ENCODE measurements at regions of chr1 and their contacts with region 1.

Region 1: DNA sequence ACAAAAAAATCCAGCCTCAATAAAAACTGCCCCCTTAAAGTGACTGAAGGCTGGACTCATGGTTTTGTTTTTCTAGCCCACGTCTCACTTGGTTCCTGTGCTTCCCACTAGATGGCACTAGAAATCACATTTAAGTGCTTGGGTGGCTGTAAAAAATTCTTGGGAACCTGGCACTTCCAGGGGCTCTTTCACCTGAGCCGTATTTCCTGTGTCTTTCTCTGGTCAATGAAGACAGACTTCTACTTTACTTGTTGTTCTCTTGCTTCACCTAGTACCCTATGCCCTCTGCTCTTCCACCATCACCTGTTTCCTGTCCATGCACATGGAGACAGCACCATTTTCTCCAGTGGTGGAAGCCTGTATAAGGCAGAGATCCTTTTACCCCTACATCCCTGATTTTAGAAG is 20.0 kb downstream of the METTL13 start:
- DNase-seq: no peak
- H3K4me3 ChIP-seq: no peak overlapping the region
- H3K27ac ChIP-seq: no peak overlapping the region
- H3K4me1 ChIP-seq: peaks cover 0 to 11% (median 5%) of the 10 kb centered on the region in 4 experiments; a peak in 3 of 7 replicates
- H3K27me3 ChIP-seq: no peaks in the 10 kb centered on the region
- CTCF ChIP-seq: peak in 2 of 3 experiments; percentile 75 to 87; a peak in 3 of 4 replicates
- EP300 ChIP-seq: no peak
- POLR2A ChIP-seq: no peak
- RAD21 ChIP-seq: peak; percentile 87 to 94

Region 2: DNA sequence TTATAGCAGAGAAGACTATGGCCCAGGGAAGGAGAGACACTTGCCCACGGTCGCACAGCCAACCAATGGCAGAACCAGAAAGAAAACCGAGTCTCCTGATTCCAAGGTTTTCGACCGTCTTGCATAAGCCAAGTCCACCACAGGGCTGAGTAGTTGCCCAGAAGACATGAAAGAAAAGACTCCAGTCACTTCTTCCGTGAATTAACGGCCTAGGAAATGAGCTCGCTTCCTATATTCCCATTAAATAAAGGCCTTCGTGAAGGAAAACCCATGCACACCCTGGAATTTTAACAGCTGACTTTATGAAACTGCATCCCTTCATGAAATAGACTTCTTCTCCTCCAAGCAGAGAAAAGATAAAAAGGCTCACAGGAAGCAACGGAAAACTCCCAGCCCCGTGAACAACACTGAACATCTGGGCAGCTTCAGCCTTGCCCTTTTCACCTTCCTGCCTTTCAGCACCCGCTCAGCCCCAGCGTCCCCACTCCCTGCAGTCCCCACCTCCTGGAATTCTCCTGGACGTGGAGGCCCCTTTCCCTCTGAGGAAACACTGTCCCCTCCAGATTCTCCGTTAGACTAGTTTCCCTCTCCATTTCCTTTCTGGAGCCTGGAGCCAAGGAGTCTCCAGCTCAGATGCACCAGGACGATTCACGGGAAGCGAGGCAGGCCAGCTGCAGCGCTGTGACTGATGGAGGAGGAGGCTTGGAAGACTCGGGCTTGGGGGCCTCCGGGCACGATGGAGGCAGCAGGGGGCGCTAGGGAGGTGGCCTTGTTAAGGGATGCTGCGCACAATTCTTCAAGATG is 146.3 kb before region 1 on chr1:
- CTCF ChIA-PET with region 1: interaction called, 19 read pairs
- POLR2A ChIA-PET with region 1: no interaction called
- DNase-seq: peak; percentile 41 to 98
- H3K4me3 ChIP-seq: no peak overlapping the region; a peak in 2 of 8 replicates
- H3K27ac ChIP-seq: no peak overlapping the region
- H3K4me1 ChIP-seq: peaks cover 0 to 5% (median 0%) of the 10 kb centered on the region in 4 experiments; a peak in 1 of 7 replicates
- H3K27me3 ChIP-seq: no peaks in the 10 kb centered on the region
- CTCF ChIP-seq: peak; percentile 79 to 91 (median 85)
- EP300 ChIP-seq: no peak
- POLR2A ChIP-seq: no peak
- RAD21 ChIP-seq: peak; percentile 65 to 71

Region 3: DNA sequence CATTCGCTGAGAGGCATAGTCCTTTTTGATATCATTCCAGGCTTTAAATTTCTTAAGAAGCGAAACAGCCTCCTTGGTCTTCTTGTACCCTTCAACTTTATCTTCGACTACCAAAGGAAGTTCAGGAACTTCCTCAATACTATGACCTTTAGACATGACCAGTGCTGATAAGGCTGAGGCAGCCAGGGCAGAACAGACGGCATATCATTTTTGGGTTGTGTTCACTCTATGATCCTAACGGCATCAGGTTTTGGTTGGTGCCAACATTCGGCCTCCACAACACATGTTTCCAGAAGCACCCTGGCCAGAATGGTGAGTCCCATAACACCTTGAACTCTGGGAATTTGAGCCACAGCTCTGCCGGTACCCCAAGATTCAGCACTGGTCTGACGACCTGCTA is 117.6 kb before region 1 on chr1:
- CTCF ChIA-PET with region 1: no interaction called
- POLR2A ChIA-PET with region 1: no interaction called
- DNase-seq: no peak
- H3K4me3 ChIP-seq: no peak overlapping the region
- H3K27ac ChIP-seq: no peak overlapping the region
- H3K4me1 ChIP-seq: no peaks in the 10 kb centered on the region
- H3K27me3 ChIP-seq: no peaks in the 10 kb centered on the region
- CTCF ChIP-seq: no peak
- EP300 ChIP-seq: no peak
- POLR2A ChIP-seq: no peak
- RAD21 ChIP-seq: no peak

Region 4: DNA sequence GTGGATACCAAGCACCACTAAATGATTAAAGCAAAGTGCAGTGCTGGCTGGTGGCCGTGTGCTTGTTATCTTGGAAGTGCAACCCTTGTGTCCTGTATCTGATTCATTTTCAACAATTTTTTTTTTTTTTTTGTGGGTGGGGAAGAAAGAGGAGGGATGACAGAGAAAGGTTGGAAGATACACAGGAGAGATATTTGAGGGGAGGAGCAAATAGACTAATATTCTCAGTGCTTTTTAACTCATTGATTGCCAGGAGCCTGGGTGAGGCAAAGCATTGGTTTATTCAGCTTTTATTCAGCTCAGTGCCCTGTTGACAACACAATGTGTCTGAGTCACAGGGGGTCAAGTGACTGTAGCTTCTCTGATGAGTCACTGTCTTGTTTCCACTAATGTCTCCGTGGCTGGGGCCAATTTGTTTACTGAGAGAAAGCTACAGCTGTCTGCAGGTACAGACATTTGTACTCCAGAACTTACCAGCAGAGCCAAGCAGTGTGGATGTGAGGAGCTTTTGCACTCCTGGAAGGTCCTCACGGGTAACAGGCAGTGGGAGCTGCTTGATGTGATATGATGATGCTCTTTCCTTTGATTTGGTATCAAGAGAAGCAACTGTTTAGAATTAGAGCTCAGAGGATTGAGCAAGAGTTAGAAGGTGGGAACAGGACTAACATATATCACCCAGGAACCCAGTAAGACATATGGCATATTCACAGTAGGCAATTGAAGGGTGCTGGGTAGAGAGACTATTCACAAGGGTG is 16.2 kb after region 1 on chr1:
- CTCF ChIA-PET with region 1: interaction called, 92 read pairs
- POLR2A ChIA-PET with region 1: interaction called, 3 read pairs
- DNase-seq: no peak
- H3K4me3 ChIP-seq: peak overlapping the region in 1 of 4 experiments; percentile 13; a peak in 2 of 8 replicates
- H3K27ac ChIP-seq: no peak overlapping the region
- H3K4me1 ChIP-seq: peaks cover 0 to 7% (median 2%) of the 10 kb centered on the region in 4 experiments; a peak in 2 of 7 replicates
- H3K27me3 ChIP-seq: no peaks in the 10 kb centered on the region
- CTCF ChIP-seq: no peak
- EP300 ChIP-seq: no peak
- POLR2A ChIP-seq: no peak
- RAD21 ChIP-seq: no peak

Region 5: DNA sequence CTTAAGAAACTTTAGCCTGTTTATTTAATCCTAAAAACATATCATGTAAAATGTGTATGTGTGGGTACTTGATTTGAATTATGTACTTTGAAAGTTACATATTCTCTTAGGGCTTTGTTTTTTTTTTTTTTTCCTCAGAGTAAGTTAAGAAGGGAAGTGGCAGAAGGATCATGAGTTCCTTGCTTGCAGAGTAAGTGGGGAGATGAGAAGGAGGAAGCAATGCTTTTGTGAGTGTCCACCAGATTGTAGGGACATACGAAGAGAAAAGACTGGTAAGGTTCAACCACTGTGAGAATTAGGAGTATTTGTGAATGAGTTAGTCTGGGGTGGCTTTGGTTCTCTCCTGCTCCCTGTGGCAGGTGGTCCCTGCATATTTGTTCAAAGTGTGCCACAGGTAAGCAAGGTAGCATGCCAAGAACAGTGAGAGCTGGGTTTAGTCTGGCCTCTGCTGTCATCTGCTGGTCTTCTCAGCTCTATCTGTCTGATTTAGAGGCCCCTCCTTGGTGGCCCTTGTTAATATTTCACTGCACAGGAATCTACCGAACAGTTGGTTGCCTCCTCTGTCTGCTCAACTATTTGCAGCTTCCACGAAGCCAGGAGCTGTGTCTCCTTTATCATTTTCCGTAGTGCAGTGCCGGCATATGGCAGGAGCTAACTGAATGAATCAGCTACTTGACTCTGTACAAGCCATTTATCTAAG is 49.3 kb after region 1 on chr1:
- CTCF ChIA-PET with region 1: interaction called, 34 read pairs
- POLR2A ChIA-PET with region 1: no interaction called
- DNase-seq: no peak
- H3K4me3 ChIP-seq: no peak overlapping the region
- H3K27ac ChIP-seq: no peak overlapping the region
- H3K4me1 ChIP-seq: no peaks in the 10 kb centered on the region; a peak in 1 of 7 replicates
- H3K27me3 ChIP-seq: no peaks in the 10 kb centered on the region
- CTCF ChIP-seq: no peak
- EP300 ChIP-seq: no peak
- POLR2A ChIP-seq: no peak
- RAD21 ChIP-seq: peak in 1 of 2 experiments; percentile 13; a peak in 1 of 4 replicates

Region 6: DNA sequence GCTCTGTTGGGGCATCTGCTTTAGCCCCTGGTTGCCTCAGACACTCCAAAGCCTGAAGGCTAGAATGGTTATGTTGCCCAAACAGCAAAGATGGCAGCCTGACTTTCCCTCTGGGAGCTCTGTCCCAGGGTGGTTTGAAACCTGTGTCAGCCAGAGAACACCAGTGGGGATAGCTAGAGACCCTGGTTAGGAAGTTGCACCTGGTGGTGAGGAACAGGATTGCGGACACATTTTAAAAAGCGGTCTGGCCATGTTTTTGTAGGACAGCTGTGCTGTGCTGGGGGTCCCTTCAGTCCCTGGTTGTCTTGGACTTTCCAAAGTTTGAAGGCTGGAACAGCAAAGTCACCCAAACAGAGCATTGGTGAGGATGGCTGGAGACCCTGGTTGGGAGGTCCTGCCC is 127.6 kb after region 1 on chr1:
- CTCF ChIA-PET with region 1: interaction called, 16 read pairs
- POLR2A ChIA-PET with region 1: no interaction called
- DNase-seq: no peak
- H3K4me3 ChIP-seq: no peak overlapping the region
- H3K27ac ChIP-seq: no peak overlapping the region
- H3K4me1 ChIP-seq: peaks cover 0 to 6% (median 1%) of the 10 kb centered on the region in 4 experiments; a peak in 1 of 7 replicates
- H3K27me3 ChIP-seq: no peaks in the 10 kb centered on the region
- CTCF ChIP-seq: peak; percentile 2 to 39 (median 10); a peak in 3 of 4 replicates
- EP300 ChIP-seq: no peak
- POLR2A ChIP-seq: no peak
- RAD21 ChIP-seq: no peak

Region 7: GRCh38 chr1:171984850-171985485 is 183.5 kb after region 1 on chr1:
- CTCF ChIA-PET with region 1: interaction called, 694 read pairs
- POLR2A ChIA-PET with region 1: interaction called, 5 read pairs
- DNase-seq: no peak
- H3K4me3 ChIP-seq: no peak overlapping the region
- H3K27ac ChIP-seq: no peak overlapping the region
- H3K4me1 ChIP-seq: no peaks in the 10 kb centered on the region
- H3K27me3 ChIP-seq: no peaks in the 10 kb centered on the region
- CTCF ChIP-seq: peak in 2 of 3 experiments; percentile 74 to 78; a peak in 3 of 4 replicates
- EP300 ChIP-seq: no peak
- POLR2A ChIP-seq: no peak
- RAD21 ChIP-seq: peak; percentile 88 to 91